Stomach (tissue), 19 donors: ENCODE measurements at regions of chr4 and their contacts with region 1.

Region 1: DNA sequence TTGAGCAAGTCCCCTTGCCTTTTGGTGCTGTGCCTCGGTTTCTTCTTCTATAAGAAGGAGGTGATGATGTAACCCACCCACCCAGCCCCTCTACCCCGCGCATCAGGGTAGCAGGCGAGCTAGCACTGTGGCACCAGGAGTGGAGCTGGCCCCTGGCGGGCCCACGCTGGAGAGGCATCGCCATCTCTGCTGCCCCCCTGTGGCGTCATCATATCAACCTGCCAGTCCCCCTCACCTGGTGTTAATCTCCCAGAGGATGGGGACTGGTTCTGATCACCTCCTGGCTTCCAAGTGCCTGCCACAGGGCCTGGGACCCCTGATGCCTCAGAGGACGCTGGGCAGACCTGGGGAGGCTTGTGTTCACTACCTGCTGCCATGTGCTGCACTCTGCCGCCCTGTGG is 6.3 kb upstream of the SORCS2 start:
- DNase-seq: peak in 1 of 2 donors; percentile 44
- H3K4me3 ChIP-seq: no peak overlapping the region
- H3K27ac ChIP-seq: no peak overlapping the region
- H3K4me1 ChIP-seq: no peaks in the 10 kb centered on the region
- H3K27me3 ChIP-seq: peaks cover 0 to 53% (median 17%) of the 10 kb centered on the region in 3 donors
- CTCF ChIP-seq: no peak
- EP300 ChIP-seq: no peak
- POLR2A ChIP-seq: no peak

Region 2: GRCh38 chr4:7719354-7720174 is 533.5 kb after region 1 on chr4:
- intact Hi-C with region 1: loop called (anchors 5 kb)
- DNase-seq: peak; percentile 49 to 81
- H3K4me3 ChIP-seq: no peak overlapping the region
- H3K27ac ChIP-seq: no peak overlapping the region
- H3K4me1 ChIP-seq: peaks cover 0 to 7% (median 5%) of the 10 kb centered on the region in 4 donors
- H3K27me3 ChIP-seq: peaks cover 0 to 41% (median 9%) of the 10 kb centered on the region in 3 donors
- CTCF ChIP-seq: peak in 5 of 7 experiments; percentile 14 to 75 (median 54)
- EP300 ChIP-seq: no peak
- POLR2A ChIP-seq: no peak